Activated CD8-positive, alpha-beta T cell treated with anti-CD3 and anti-CD28 coated beads, Interleukin-2, amount 10 ng/mL, durations not matched to agents 7 days and 5 days (primary cell): ENCODE measurements at regions of chr14 and their contacts with region 1.

Region 1: GRCh38 chr14:67426983-67427606 is 15.1 kb upstream of the PLEK2 start:
- DNase-seq: peak; percentile 81
- ATAC-seq: peak; percentile 85
- H3K4me3 Mint-ChIP-seq: no peak overlapping the region
- H3K27ac Mint-ChIP-seq: no peak overlapping the region
- H3K4me1 Mint-ChIP-seq: peaks cover 7% of the 10 kb centered on the region
- H3K27me3 Mint-ChIP-seq: peaks cover 31% of the 10 kb centered on the region

Region 2: GRCh38 chr14:67413801-67414769 is 13.0 kb before region 1 on chr14:
- CTCF ChIA-PET with region 1: interaction called, 10 read pairs
- POLR2A ChIA-PET with region 1: no interaction called
- DNase-seq: peak; percentile 32
- ATAC-seq: peak; percentile 38
- H3K4me3 Mint-ChIP-seq: no peak overlapping the region
- H3K27ac Mint-ChIP-seq: peak overlapping the region; percentile 46
- H3K4me1 Mint-ChIP-seq: peaks cover 20% of the 10 kb centered on the region
- H3K27me3 Mint-ChIP-seq: peaks cover 27% of the 10 kb centered on the region

Region 3: DNA sequence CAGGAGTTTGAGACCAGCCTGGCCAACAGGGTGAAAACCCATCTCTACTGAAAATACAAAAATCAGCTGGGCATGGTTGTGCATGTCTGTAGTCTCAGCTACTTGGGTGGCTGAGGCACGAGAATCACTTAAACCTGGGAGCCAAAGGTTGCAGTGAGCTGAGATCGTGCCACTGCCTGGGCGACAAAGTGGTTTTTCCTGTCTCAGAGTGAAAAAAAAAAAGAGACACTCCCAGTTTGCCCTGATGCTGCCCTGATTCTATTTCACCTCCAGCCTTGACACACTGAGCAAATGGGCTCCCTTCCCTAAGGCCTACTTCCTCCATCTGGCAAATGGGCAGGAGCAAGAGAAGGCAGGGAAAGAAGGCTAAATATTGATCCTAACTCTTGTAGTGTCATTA is 13.4 kb after region 1 on chr14:
- CTCF ChIA-PET with region 1: interaction called, 23 read pairs
- POLR2A ChIA-PET with region 1: no interaction called
- DNase-seq: no peak
- ATAC-seq: no peak
- H3K4me3 Mint-ChIP-seq: no peak overlapping the region
- H3K27ac Mint-ChIP-seq: no peak overlapping the region
- H3K4me1 Mint-ChIP-seq: no peaks in the 10 kb centered on the region
- H3K27me3 Mint-ChIP-seq: peaks cover 28% of the 10 kb centered on the region

Region 4: GRCh38 chr14:67526676-67527459 is 99.8 kb after region 1 on chr14:
- CTCF ChIA-PET with region 1: interaction called, 28 read pairs
- POLR2A ChIA-PET with region 1: no interaction called
- DNase-seq: peak; percentile 60
- ATAC-seq: peak; percentile 83
- H3K4me3 Mint-ChIP-seq: no peak overlapping the region
- H3K27ac Mint-ChIP-seq: no peak overlapping the region
- H3K4me1 Mint-ChIP-seq: no peaks in the 10 kb centered on the region
- H3K27me3 Mint-ChIP-seq: peaks cover 56% of the 10 kb centered on the region

Region 5: DNA sequence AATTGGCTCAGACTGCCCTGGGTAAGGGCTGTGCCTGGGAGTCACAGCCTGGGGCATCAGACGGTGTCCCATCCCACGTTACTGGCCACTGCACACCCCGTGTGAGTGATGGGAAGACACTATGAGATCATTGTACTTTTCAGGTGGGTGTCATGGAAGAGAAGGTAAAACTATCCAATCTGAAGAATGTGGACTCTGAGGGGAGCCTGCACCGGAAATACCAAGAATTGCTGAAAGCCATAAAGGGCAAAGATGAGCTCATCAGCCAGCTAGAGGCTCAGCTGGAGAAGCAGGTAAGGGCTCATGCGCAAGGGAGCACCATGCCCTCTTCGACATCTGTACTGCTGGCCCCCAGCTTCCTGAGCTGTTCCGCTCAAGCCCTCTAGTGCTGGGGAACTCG is 130.0 kb after region 1 on chr14:
- CTCF ChIA-PET with region 1: interaction called, 25 read pairs
- POLR2A ChIA-PET with region 1: no interaction called
- DNase-seq: no peak
- ATAC-seq: no peak
- H3K4me3 Mint-ChIP-seq: no peak overlapping the region
- H3K27ac Mint-ChIP-seq: no peak overlapping the region
- H3K4me1 Mint-ChIP-seq: peaks cover 2% of the 10 kb centered on the region
- H3K27me3 Mint-ChIP-seq: peaks cover 8% of the 10 kb centered on the region

Region 6: GRCh38 chr14:67599698-67600561 is 172.8 kb after region 1 on chr14 and contains the start of gene PIGH:
- CTCF ChIA-PET with region 1: interaction called, 19 read pairs
- POLR2A ChIA-PET with region 1: interaction called, 4 read pairs
- DNase-seq: peak; percentile 95
- ATAC-seq: peak; percentile 99
- H3K4me3 Mint-ChIP-seq: peak within 1 kb of the TSS; percentile 82
- H3K27ac Mint-ChIP-seq: peak within 1 kb of the TSS; percentile 95
- H3K4me1 Mint-ChIP-seq: peaks cover 28% of the 10 kb centered on the region
- H3K27me3 Mint-ChIP-seq: no peaks in the 10 kb centered on the region
- total RNA-seq, gene PIGH: 14.8 to 17.5 TPM

Region 7: GRCh38 chr14:67666750-67667449 is 239.8 kb after region 1 on chr14:
- CTCF ChIA-PET with region 1: interaction called, 20 read pairs
- POLR2A ChIA-PET with region 1: no interaction called
- DNase-seq: peak; percentile 55
- ATAC-seq: peak; percentile 85
- H3K4me3 Mint-ChIP-seq: no peak overlapping the region
- H3K27ac Mint-ChIP-seq: peak overlapping the region; percentile 28
- H3K4me1 Mint-ChIP-seq: peaks cover 33% of the 10 kb centered on the region
- H3K27me3 Mint-ChIP-seq: no peaks in the 10 kb centered on the region